Upper lobe of right lung (tissue), 1 donor: ENCODE measurements at regions of chr4 and their contacts with region 1.

Region 1: GRCh38 chr4:181528570-181529184 is 714.5 kb upstream of the TENM3 start:
- DNase-seq: peak; percentile 74
- ATAC-seq: peak; percentile 94
- H3K4me3 ChIP-seq: no peak overlapping the region
- H3K27ac ChIP-seq: no peak overlapping the region
- H3K4me1 ChIP-seq: no peaks in the 10 kb centered on the region
- H3K27me3 ChIP-seq: no peaks in the 10 kb centered on the region
- CTCF ChIP-seq: peak; percentile 75

Region 2: DNA sequence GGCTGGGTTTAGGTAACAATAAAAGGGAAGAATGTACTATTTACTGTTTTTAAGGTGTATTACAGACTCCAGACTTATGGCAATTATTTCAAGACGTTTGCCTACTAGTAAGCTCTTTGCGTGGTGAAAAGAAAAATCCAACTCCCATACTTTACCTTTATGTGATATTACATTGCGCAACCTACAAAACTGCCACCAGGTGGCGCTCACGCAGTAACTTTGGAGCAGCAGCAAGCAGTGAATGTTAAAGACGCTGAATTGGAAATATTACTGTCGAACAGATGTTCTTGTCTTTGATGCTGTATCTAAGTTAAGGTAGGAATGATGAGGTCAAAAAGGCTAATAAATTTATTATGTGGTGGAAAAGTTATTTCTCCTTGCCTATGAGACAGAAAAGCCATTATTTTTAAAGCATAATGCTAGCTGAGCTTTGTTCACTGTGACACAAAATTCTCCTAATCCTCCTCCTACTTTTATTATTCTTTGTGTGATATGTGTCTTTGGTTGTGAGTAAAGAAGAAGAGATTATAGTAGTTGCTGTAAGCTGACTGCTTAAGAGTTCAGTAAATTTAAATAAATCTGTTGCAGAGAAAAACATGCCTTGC is 385.3 kb before region 1 on chr4:
- intact Hi-C with region 1: loop called (anchors 10 kb)
- DNase-seq: peak; percentile 77
- ATAC-seq: peak; percentile 76
- H3K4me3 ChIP-seq: no peak overlapping the region
- H3K27ac ChIP-seq: no peak overlapping the region
- H3K4me1 ChIP-seq: no peaks in the 10 kb centered on the region
- H3K27me3 ChIP-seq: no peaks in the 10 kb centered on the region
- CTCF ChIP-seq: peak; percentile 93

Region 3: GRCh38 chr4:181176306-181176705 is 352.4 kb before region 1 on chr4:
- intact Hi-C with region 1: no loop called
- DNase-seq: no peak
- ATAC-seq: no peak
- H3K4me3 ChIP-seq: no peak overlapping the region
- H3K27ac ChIP-seq: no peak overlapping the region
- H3K4me1 ChIP-seq: no peaks in the 10 kb centered on the region
- H3K27me3 ChIP-seq: no peaks in the 10 kb centered on the region
- CTCF ChIP-seq: no peak

Region 4: GRCh38 chr4:181234951-181235680 is 293.6 kb before region 1 on chr4:
- intact Hi-C with region 1: no loop called
- DNase-seq: no peak
- ATAC-seq: no peak
- H3K4me3 ChIP-seq: no peak overlapping the region
- H3K27ac ChIP-seq: no peak overlapping the region
- H3K4me1 ChIP-seq: no peaks in the 10 kb centered on the region
- H3K27me3 ChIP-seq: no peaks in the 10 kb centered on the region
- CTCF ChIP-seq: no peak